Activated naive CD4-positive, alpha-beta T cell treated with anti-CD3 and anti-CD28 coated beads for 36 hours (primary cell): ENCODE measurements at regions of chr5 and their contacts with region 1.

Region 1: DNA sequence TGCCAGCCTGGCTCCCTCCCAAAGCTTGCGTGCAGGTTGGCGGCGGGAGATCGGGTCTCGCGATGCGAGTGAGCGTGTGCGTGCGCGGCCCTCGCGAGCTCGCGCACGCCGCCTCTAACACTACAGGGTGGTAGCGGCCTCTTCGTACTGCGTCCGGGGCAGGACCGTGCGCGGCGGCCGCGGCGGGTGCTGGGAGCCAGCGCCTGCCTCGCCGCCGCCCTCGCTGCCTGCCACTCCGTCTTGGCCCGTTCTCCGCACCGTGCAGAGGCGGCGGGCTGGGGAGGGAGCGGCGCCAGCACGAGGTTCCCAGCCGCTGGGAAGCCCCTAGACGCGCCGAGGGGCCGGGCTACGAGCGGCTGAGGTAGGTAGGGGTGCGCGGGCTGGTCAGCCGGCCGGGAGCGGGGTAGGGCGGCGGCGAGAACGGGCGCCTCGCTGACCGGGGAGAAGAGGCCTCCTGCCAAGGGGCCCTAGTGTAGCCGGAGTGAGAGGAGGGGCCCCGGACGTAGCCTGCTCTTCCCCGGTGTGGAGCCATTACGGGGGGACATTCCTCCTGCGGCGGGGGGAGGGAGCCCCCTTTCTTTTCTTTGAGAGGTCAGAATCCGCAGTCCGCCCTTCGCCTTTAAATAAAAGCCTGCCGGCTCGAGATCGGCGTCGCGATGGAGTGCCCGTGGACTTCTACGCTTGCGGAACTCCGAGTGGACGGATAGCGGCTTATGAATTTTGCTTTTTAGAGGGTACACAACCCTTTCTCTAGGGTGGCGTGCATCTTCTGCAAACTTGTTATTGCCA is at the start of gene C5orf24:
- DNase-seq: peak; percentile 96
- H3K4me3 Mint-ChIP-seq: peak within 1 kb of the TSS; percentile 88
- H3K27ac Mint-ChIP-seq: peak within 1 kb of the TSS; percentile 97
- H3K4me1 Mint-ChIP-seq: peaks cover 32% of the 10 kb centered on the region
- H3K27me3 Mint-ChIP-seq: no peaks in the 10 kb centered on the region
- total RNA-seq, gene C5orf24: 17.6 to 21.2 TPM

Region 2: GRCh38 chr5:134609232-134609851 is 236.7 kb before region 1 on chr5:
- CTCF ChIA-PET with region 1: no interaction called
- intact Hi-C with region 1: loop called (anchors 5 kb)
- DNase-seq: no peak
- H3K4me3 Mint-ChIP-seq: peak overlapping the region; percentile 17
- H3K27ac Mint-ChIP-seq: peak overlapping the region; percentile 87
- H3K4me1 Mint-ChIP-seq: peaks cover 37% of the 10 kb centered on the region
- H3K27me3 Mint-ChIP-seq: no peaks in the 10 kb centered on the region

Region 3: DNA sequence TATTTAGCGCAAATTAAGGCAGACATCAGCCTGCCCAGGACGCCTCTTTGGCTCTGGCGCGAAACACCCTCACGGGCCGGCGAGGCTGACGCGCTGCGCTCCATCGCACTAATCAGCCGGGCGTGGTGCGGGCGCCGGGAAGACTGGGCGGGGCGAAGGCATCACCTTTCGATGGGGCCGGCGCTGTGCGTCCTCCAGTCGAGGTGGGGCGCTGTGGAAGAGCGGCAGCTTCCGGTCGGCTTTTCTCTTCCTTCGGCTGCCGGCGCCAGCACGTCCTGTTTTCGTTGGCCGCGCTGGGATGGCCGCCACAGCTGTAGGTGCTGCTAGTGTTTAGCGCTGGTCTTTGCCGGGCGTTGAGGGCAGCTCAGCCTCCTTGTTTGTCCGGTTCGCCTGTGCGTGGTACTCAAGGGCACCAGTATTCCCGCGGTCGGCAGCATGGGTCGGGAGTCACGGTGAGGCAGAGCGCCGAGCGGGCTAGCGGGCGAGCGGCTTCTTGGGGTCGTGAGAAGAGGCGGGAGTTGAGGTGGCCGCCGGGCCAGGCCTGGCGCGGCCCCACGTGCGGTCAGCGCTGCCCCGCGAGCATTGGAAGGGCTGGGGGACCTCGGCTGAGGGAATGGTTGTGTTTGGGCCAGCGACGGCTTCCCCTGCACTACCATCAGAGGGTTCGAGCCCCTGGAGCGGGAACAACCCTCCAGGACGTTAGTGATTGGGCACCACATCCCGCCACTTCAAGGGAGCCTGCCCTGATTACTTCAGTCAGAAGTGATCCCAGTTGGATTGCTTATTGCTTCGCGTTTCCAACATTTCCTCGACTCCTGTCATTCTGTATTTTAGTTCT is 87.3 kb before region 1 on chr5 and contains the start of gene DDX46:
- CTCF ChIA-PET with region 1: interaction called, 3 read pairs
- intact Hi-C with region 1: loop called (anchors 1 kb)
- DNase-seq: peak; percentile 97
- H3K4me3 Mint-ChIP-seq: peak within 1 kb of the TSS; percentile 99
- H3K27ac Mint-ChIP-seq: peak within 1 kb of the TSS; percentile 80
- H3K4me1 Mint-ChIP-seq: peaks cover 34% of the 10 kb centered on the region
- H3K27me3 Mint-ChIP-seq: no peaks in the 10 kb centered on the region
- total RNA-seq, gene DDX46: 47.3 to 48.0 TPM

Region 4: DNA sequence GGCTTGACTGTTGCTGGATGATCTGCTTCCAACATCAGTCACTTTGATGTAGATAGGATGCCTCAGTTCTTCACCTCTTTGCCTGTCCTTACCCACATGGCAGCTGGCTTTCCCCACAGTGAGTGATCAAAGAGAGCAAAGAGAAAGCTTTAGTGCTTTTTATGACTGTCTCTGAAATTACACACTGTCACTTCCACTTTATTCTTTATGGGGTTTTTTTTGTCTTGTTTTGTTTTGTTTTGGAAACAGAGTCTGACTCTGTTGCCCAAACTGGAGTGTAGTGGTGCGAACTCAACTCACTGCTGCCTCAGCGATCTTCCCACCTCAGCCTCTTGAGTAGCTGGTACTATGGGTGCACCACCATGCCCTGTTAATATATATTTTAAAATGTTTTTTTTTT is 32.6 kb before region 1 on chr5:
- CTCF ChIA-PET with region 1: no interaction called
- intact Hi-C with region 1: loop called (anchors 2 kb)
- DNase-seq: peak; percentile 64
- H3K4me3 Mint-ChIP-seq: no peak overlapping the region
- H3K27ac Mint-ChIP-seq: peak overlapping the region; percentile 68
- H3K4me1 Mint-ChIP-seq: peaks cover 7% of the 10 kb centered on the region
- H3K27me3 Mint-ChIP-seq: no peaks in the 10 kb centered on the region

Region 5: DNA sequence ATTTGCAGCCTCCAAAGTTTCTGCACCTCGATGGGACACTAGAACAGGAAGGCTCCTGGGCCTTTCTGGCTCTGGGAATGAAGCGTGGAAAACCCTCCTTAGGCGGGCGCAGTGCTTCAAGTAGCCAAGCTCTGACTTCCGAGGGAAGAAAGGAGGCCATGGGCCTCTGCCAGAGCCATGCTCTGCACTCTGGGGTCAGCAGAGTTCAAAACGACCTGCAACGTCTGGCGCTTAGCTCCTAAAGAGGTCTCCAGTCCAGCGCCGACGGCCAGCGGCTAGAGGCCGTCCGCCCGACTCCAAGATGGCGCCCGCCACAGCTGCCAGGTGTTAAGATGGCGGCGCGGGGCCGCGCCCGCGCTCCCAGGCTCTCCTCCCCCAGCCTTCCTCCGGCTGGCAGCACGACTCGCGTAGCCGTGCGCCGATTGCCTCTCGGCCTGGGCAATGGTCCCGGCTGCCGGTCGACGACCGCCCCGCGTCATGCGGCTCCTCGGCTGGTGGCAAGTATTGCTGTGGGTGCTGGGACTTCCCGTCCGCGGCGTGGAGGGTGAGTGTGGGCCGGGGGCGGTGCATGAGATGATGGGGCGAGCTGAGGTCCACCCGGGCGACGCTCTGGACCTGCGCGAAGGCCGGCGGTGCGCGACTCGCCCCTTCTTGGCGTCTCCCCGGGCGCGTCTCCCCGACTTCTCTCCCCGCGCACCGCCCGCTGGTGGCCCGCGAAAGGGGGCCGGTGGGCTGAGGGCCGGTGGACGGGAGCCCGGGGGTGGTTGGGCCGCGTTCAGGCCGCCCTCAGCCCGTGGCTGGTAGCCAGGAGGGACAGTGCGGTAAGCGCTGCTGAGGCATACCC is 28.2 kb after region 1 on chr5 and contains the start of gene TXNDC15:
- CTCF ChIA-PET with region 1: interaction called, 4 read pairs
- intact Hi-C with region 1: loop called (anchors 1 kb)
- DNase-seq: peak; percentile 84
- H3K4me3 Mint-ChIP-seq: peak within 1 kb of the TSS; percentile 89
- H3K27ac Mint-ChIP-seq: peak within 1 kb of the TSS; percentile 92
- H3K4me1 Mint-ChIP-seq: peaks cover 30% of the 10 kb centered on the region
- H3K27me3 Mint-ChIP-seq: no peaks in the 10 kb centered on the region
- total RNA-seq, gene TXNDC15: 19.8 to 20.9 TPM

Region 6: GRCh38 chr5:135010502-135011354 is 164.7 kb after region 1 on chr5:
- CTCF ChIA-PET with region 1: no interaction called
- intact Hi-C with region 1: no loop called
- DNase-seq: no peak
- H3K4me3 Mint-ChIP-seq: no peak overlapping the region
- H3K27ac Mint-ChIP-seq: no peak overlapping the region
- H3K4me1 Mint-ChIP-seq: no peaks in the 10 kb centered on the region
- H3K27me3 Mint-ChIP-seq: no peaks in the 10 kb centered on the region